ENCODE measurements at regions of chr1 and their contacts with region 1.

Region 1: GRCh38 chr1:244970661-244971551 is 106.6 kb upstream of the HNRNPU start:
- DNase-seq: peak; percentile 82
- H3K4me3 Mint-ChIP-seq: peak overlapping the region; percentile 92
- H3K27ac Mint-ChIP-seq: peak overlapping the region; percentile 98
- H3K4me1 Mint-ChIP-seq: peaks cover 21% of the 10 kb centered on the region
- H3K27me3 Mint-ChIP-seq: peaks cover 2% of the 10 kb centered on the region

Region 2: DNA sequence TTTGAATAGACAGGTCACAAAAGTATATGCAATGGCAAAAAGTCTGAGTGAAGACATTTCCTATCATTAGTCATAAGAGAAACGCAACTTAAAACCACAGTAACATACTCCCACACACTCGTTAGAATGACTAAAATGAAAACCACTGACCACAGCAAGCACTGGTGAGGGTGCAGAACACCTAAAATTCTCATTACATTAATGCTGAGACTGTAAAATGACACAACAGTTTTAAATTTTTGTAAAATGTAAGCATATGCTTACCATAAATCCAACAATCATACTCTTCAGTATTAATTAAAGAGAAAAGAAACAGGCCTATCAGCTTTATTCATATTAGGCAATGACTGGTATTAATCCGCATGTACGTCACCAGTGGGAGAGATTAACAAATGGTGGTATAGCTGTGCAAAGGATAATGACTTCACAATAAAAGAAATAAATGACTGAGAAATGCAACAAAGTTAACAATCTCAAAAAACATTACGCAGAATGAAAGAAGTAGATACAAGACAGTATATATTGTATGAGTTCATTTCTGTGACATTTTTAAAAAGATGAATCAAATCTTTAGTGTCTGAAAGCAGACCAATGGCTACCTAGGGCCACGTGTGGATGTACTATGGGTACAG is 1374.4 kb before region 1 on chr1:
- intact Hi-C with region 1: loop called (anchors 5 kb)
- DNase-seq: peak; percentile 32
- H3K4me3 Mint-ChIP-seq: peak overlapping the region; percentile 75
- H3K27ac Mint-ChIP-seq: peak overlapping the region; percentile 94
- H3K4me1 Mint-ChIP-seq: peaks cover 32% of the 10 kb centered on the region
- H3K27me3 Mint-ChIP-seq: no peaks in the 10 kb centered on the region

Region 3: DNA sequence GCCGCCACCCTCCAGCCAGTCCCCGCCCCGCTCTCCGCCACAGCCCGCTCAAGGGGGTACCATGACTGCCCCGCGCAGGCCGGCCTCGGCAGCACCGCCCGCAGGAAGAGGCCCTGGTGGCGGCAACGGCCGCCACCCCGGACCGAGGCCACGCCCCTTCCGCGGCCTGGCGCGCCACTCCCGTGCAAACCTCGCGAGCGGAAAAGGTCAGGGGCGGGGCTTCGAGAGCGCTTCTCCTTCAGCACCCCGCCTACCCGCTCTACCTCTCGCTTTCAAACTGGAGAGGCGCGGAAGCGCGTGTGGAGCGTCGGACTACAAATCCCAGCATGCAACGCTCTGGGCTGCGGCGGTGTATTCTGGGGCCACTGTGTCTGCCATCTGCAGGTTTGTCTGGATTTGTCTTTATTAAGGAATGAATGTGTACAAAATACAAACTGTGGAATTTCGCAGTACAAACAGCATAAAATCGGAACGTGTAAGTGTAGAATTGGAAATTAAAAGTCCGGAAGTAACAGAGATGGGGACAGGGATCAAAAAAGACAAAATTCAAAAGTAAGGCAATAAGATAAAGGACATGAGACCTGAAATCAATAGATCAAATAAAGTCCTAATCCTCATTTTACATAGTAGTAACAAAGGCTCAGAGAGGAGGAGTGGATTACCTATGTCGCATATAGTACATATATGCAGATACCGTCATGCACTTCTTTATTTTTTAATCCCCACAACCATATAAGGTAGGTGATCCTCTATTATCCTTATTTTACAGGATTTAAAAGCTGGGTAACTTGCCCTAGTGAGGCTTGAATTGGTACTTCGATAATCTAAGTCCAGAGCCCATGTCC is 518.7 kb before region 1 on chr1:
- intact Hi-C with region 1: loop called (anchors 2 kb)
- DNase-seq: peak; percentile 98
- H3K4me3 Mint-ChIP-seq: peak overlapping the region; percentile 95
- H3K27ac Mint-ChIP-seq: peak overlapping the region; percentile 96
- H3K4me1 Mint-ChIP-seq: peaks cover 41% of the 10 kb centered on the region
- H3K27me3 Mint-ChIP-seq: no peaks in the 10 kb centered on the region

Region 4: DNA sequence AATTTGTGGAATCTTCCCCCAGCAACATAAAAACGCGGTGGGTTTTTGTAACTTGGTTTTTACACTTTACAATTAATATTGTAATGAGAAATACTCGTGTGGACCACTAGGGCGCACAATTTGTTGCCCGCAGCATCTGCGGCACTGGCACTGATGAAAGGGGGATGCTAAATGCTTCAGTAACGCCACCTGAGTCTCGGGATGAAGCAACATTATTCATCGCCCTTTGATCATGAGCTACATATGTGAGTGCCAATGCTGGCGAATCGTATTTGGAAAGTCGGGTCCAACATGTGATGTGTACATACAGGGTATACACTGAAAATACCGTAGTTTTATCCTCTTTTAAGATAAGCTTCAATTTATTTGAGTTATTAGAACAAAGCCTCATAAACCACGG is 169.7 kb before region 1 on chr1:
- intact Hi-C with region 1: loop called (anchors 1 kb)
- DNase-seq: peak; percentile 6
- H3K4me3 Mint-ChIP-seq: no peak overlapping the region
- H3K27ac Mint-ChIP-seq: no peak overlapping the region
- H3K4me1 Mint-ChIP-seq: peaks cover 8% of the 10 kb centered on the region
- H3K27me3 Mint-ChIP-seq: peaks cover 14% of the 10 kb centered on the region

Region 5: DNA sequence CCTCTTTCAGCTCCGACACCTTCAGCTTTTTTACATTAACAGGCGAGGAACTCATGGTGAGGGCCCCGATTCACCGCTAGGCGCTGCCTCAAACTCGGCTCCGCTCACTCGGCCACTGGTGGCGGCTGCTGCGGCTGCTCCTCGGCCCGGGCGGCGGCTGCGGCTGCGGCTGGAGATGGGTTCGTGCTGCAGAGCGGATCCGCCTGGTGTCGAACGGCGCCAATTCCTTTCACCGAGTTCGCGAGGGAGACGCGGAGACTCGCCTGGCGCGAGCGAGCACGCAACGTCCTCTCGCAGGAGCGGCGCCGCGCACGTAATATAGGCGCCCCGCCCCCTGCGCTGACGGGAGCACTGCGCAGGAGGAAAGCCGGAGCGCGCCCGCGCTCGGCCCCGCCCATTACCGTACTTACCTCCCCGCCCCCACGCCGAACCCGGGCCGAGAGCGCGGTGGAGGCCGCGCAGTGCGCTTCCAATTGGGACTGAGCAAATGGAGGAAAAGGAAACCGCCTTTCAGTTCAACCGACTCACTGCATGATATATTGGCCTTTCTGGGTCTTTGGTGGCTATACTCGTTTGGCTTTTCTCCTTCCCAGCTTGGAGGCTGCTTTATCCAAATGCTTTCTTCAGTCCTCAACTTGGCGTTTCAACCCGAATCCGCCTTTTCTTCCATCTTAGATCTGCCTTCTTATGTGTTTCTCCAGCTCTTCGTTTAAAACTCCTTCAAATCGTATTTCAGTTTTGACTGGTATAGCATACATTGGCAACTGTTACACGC is 106.5 kb before region 1 on chr1 and contains the start of gene HNRNPU:
- intact Hi-C with region 1: loop called (anchors 1 kb)
- DNase-seq: peak; percentile 97
- H3K4me3 Mint-ChIP-seq: peak within 1 kb of the TSS; percentile 87
- H3K27ac Mint-ChIP-seq: peak within 1 kb of the TSS; percentile 95
- H3K4me1 Mint-ChIP-seq: peaks cover 41% of the 10 kb centered on the region
- H3K27me3 Mint-ChIP-seq: no peaks in the 10 kb centered on the region
- total RNA-seq, gene HNRNPU: 566 and 573 TPM in 2 replicates

Region 6: DNA sequence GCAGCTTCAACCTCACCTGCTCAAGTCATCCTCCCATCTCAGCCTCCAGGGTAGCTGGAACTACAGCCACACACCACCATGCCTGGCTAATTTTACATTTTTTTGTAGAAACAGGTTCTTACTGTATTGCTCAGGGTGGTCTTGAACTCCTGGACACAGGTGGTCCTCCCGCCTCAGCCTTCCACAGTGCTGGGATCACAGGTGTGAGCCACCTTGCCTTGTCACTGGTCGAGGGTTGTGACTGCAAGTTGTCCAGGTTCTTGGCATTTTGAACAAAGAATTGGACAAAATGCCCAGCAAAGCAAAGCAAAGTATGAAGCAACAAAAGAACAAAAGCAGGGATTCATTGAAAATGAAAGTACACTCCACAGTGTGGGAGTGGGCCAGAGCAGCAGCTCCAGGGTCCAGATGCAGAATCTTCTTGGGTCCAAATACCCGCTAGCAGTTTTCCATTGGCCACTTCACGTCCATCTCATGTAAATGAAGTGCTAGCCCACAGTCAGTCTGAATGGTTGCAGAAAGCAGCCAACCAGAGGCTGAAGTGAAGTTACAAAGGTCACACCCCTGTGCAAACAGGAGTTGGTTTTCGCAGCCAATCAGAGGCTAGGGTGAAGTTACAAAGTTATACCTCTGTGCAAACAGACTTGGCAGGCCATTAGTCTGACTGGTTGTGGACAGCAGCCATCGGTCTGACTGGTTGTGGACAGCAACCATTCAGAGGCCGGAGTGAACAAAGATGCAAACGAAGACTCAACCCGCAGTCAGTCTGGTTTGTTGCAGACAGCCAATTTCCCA is 74.4 kb after region 1 on chr1:
- intact Hi-C with region 1: loop called (anchors 1 kb)
- DNase-seq: no peak
- H3K4me3 Mint-ChIP-seq: no peak overlapping the region
- H3K27ac Mint-ChIP-seq: no peak overlapping the region
- H3K4me1 Mint-ChIP-seq: peaks cover 6% of the 10 kb centered on the region
- H3K27me3 Mint-ChIP-seq: no peaks in the 10 kb centered on the region

Measured in activated T-helper 1 cell treated with anti-CD3 and anti-CD28 coated beads, Interleukin-12 subunit alpha, Interleukin-12 subunit beta, Interleukin-2, Interleukin-4 antibody, amounts not matched to agents 30 ng/mL and 10 ng/mL and 1 ng/mL, durations not matched to agents 14 hours and 24 hours and 36 hours (primary cell).